Panc1 (cell line): ENCODE measurements at regions of chr1 and their contacts with region 1.

Region 1: DNA sequence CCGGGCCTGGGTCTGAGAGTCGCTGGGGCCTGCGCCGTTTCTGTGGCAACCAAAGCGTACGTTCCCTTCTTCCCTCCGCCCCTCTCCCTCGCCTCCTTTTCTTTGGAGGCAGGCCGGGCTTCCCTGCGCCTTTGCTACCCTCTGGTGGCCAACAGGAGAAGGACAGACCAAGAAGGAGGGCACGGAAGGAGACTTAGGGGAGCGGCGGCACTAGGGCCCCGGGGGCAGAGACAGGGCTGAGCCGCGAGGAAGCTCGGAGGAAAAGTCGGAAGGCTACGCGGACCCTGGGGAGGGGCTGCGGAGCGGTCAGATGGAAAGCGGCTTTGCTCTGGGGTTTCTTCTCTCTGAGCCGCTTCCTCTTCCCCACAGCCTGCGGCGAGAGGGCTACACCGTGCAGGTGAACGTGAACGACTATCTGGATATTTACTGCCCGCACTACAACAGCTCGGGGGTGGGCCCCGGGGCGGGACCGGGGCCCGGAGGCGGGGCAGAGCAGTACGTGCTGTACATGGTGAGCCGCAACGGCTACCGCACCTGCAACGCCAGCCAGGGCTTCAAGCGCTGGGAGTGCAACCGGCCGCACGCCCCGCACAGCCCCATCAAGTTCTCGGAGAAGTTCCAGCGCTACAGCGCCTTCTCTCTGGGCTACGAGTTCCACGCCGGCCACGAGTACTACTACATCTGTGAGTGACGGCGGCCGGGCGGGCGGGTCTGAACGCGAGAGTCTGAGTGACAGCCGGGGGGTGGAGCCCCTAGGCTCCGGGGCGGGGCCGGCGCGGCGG is 6.3 kb downstream of the EFNA3 start:
- DNase-seq: peak; percentile 87
- ATAC-seq: peak; percentile 88
- H3K4me3 ChIP-seq: peak overlapping the region; percentile 66 to 75
- H3K27ac ChIP-seq: peak overlapping the region; percentile 71; the same call in 1 of the 2 replicates
- H3K4me1 ChIP-seq: peaks cover 18% of the 10 kb centered on the region
- H3K27me3 ChIP-seq: peaks cover 6% of the 10 kb centered on the region
- CTCF ChIP-seq: peak; percentile 92

Region 2: DNA sequence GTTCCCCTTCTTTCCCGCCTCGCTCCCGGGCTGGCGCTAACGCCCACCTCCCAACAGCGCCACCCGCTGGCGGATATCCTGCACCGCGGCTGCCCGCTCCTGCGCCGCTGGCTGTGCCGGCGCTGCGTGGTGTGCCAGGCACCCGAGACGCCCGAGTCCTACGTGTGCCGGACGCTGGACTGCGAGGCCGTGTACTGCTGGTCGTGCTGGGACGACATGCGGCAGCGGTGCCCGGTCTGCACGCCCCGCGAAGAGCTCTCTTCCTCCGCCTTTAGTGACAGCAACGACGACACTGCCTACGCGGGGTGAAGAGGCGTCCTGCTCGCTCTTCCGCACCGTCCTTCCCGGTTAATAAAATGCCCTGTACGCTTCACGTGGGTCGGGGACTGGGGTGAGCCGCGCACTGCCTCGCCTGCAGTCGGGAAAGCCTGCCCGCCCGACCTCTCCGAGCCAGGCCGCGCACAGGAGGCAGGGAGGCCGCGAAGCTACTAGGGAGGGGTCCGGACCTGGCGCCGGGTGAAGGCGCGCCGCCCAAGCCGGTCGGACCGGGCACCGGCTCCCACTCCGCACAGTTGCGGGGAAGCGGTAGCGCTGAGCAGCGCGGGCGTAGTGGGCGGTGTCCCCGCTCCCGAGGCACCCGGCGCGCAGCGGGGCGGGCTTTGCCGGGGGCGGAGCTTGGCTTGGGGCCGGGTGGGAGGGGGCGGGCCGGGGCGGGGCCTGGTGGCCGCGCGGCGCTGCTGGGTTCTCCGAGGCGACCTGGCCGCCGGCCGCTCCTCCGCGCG is 34.2 kb before region 1 on chr1 and contains the start of gene ADAM15:
- CTCF ChIA-PET with region 1: interaction called, 11 read pairs
- POLR2A ChIA-PET with region 1: no interaction called
- in situ Hi-C with region 1: no loop called
- intact Hi-C with region 1: no loop called
- DNase-seq: no peak
- ATAC-seq: peak; percentile 88
- H3K4me3 ChIP-seq: peak within 1 kb of the TSS; percentile 69 to 74
- H3K27ac ChIP-seq: peak within 1 kb of the TSS; percentile 77
- H3K4me1 ChIP-seq: peaks cover 14% of the 10 kb centered on the region
- H3K27me3 ChIP-seq: no peaks in the 10 kb centered on the region
- CTCF ChIP-seq: peak; percentile 97
- total RNA-seq, gene ADAM15: 41.7 TPM

Region 3: GRCh38 chr1:155105604-155106022 is 20.7 kb after region 1 on chr1:
- CTCF ChIA-PET with region 1: no interaction called
- POLR2A ChIA-PET with region 1: no interaction called
- in situ Hi-C with region 1: no loop called
- intact Hi-C with region 1: no loop called
- DNase-seq: no peak
- ATAC-seq: no peak
- H3K4me3 ChIP-seq: no peak overlapping the region
- H3K27ac ChIP-seq: no peak overlapping the region
- H3K4me1 ChIP-seq: no peaks in the 10 kb centered on the region
- H3K27me3 ChIP-seq: no peaks in the 10 kb centered on the region
- CTCF ChIP-seq: no peak

Region 4: GRCh38 chr1:155145491-155145890 is 60.6 kb after region 1 on chr1:
- CTCF ChIA-PET with region 1: no interaction called
- POLR2A ChIA-PET with region 1: no interaction called
- in situ Hi-C with region 1: no loop called
- intact Hi-C with region 1: no loop called
- DNase-seq: no peak
- ATAC-seq: no peak
- H3K4me3 ChIP-seq: no peak overlapping the region
- H3K27ac ChIP-seq: no peak overlapping the region
- H3K4me1 ChIP-seq: no peaks in the 10 kb centered on the region
- H3K27me3 ChIP-seq: no peaks in the 10 kb centered on the region
- CTCF ChIP-seq: no peak